ENCODE measurements at regions of chr3 and their contacts with region 1.

Region 1: GRCh38 chr3:129249276-129250065 is at the start of gene COPG1:
- DNase-seq: peak; percentile 75
- ATAC-seq: peak; percentile 88
- H3K4me3 ChIP-seq: peak within 1 kb of the TSS; percentile 95 to 97
- H3K27ac ChIP-seq: peak within 1 kb of the TSS; percentile 62
- H3K4me1 ChIP-seq: peaks cover 7 to 23% of the 10 kb centered on the region in 2 experiments; a peak in 3 of 4 replicates
- H3K27me3 ChIP-seq: no peaks in the 10 kb centered on the region
- CTCF ChIP-seq: no peak
- POLR2A ChIP-seq: peak; percentile 66
- RAD21 ChIP-seq: no peak
- total RNA-seq, gene COPG1: 182 TPM

Region 2: DNA sequence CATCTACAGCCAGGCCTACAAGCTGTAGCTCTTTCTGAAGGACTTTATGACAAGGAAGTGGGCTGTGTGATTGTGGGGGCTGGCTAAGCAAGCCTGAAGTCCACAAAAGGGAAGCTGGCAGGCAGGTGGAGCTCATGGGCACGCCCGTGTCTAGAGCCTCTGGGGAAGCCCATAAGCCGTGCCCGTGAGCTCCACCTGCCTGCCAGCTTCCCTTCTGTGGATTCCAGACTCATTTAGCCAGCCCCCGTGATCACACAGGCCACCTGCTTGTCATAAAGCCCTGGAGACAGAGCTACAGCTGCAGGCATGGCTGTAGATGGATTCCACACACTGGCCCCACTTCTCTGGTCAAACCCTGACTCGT is 233.1 kb before region 1 on chr3:
- CTCF ChIA-PET with region 1: interaction called, 10 read pairs
- POLR2A ChIA-PET with region 1: no interaction called
- RAD21 ChIA-PET with region 1: no interaction called
- intact Hi-C with region 1: loop called (anchors 10 kb)
- DNase-seq: no peak
- ATAC-seq: peak; percentile 89
- H3K4me3 ChIP-seq: no peak overlapping the region
- H3K27ac ChIP-seq: no peak overlapping the region
- H3K4me1 ChIP-seq: peaks cover 19 to 25% of the 10 kb centered on the region in 2 experiments
- H3K27me3 ChIP-seq: no peaks in the 10 kb centered on the region
- CTCF ChIP-seq: peak; percentile 10 to 46 (median 44); a peak in 3 of 6 replicates
- POLR2A ChIP-seq: no peak
- RAD21 ChIP-seq: no peak; the same call in 1 of the 2 replicates

Region 3: DNA sequence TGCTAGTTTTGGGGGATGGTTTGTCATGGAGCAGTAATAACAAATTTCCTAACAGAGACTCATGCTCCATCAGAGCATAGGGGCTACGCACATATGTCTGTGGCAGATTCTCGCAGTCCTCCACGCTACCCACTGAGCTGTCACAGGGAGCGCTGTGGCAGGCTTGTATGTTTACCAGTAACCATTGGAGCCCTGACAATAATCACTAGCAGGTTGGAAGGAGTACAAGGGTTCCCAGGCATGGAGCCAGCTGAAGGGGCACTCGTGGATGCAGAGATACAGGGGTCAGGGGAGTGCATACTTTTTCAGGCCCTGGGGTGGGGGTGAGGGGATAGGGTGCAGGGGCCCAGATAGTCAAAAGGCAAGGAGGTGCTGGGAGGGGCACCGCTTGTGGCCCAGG is 196.8 kb before region 1 on chr3:
- CTCF ChIA-PET with region 1: interaction called, 51 read pairs
- POLR2A ChIA-PET with region 1: interaction called, 3 read pairs
- RAD21 ChIA-PET with region 1: interaction called, 4 to 7 read pairs
- intact Hi-C with region 1: loop called (anchors 1 kb)
- DNase-seq: no peak
- ATAC-seq: no peak
- H3K4me3 ChIP-seq: no peak overlapping the region
- H3K27ac ChIP-seq: no peak overlapping the region
- H3K4me1 ChIP-seq: peaks cover 0 to 26% of the 10 kb centered on the region in 2 experiments; a peak in 3 of 4 replicates
- H3K27me3 ChIP-seq: no peaks in the 10 kb centered on the region
- CTCF ChIP-seq: no peak
- POLR2A ChIP-seq: no peak
- RAD21 ChIP-seq: no peak

Region 4: GRCh38 chr3:129183569-129184395 is 65.7 kb before region 1 on chr3 and contains the start of gene CNBP:
- CTCF ChIA-PET with region 1: interaction called, 8 read pairs
- POLR2A ChIA-PET with region 1: interaction called, 12 read pairs
- RAD21 ChIA-PET with region 1: interaction called in 1 of 2 experiments, 3 read pairs
- intact Hi-C with region 1: loop called (anchors 2 kb)
- DNase-seq: peak; percentile 78
- ATAC-seq: peak; percentile 97
- H3K4me3 ChIP-seq: peak within 1 kb of the TSS; percentile 73 to 99
- H3K27ac ChIP-seq: peak within 1 kb of the TSS; percentile 99
- H3K4me1 ChIP-seq: peaks cover 7 to 32% of the 10 kb centered on the region in 2 experiments
- H3K27me3 ChIP-seq: no peaks in the 10 kb centered on the region
- CTCF ChIP-seq: no peak
- POLR2A ChIP-seq: no peak
- RAD21 ChIP-seq: no peak; the same call in 1 of the 2 replicates
- total RNA-seq, gene CNBP: 353 TPM

Region 5: DNA sequence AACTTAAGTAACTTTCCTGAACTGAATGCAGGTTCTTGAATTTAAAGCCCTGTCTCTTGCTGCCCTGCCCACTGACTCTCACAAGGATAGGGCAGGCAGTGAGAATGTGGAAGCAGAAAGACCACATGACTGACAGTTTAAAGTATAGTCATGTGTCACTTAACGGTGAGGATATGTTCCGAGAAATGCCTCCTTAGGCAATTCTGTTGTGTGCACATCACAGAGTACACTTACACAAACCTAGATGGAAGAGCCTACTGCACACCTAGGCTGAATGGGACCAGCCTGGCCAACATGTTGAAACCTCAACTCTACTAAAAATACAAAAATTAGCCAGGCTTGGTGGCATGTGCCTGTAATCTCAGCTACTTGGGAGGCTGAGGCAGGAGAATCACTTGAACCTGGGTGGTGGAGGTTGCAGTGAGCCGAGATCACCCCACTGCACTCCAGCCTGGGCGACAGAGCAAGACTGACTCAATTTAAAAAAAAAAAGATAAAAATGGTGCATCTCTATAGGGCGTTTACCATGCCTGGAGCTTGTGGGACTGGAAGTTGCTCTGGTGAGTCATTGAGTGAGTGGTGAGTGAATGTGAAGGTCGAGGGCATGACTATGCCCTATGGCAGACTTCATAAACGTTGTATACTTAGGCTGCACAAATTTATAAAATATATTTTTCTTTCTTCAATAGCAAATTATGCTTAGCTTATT is 19.0 kb before region 1 on chr3:
- CTCF ChIA-PET with region 1: interaction called, 14 read pairs
- POLR2A ChIA-PET with region 1: interaction called, 3 read pairs
- RAD21 ChIA-PET with region 1: interaction called, 3 to 4 read pairs
- intact Hi-C with region 1: no loop called
- DNase-seq: no peak
- ATAC-seq: peak; percentile 60
- H3K4me3 ChIP-seq: peak overlapping the region in 1 of 2 experiments; percentile 22; a peak in 1 of 4 replicates
- H3K27ac ChIP-seq: no peak overlapping the region
- H3K4me1 ChIP-seq: peaks cover 27 to 68% of the 10 kb centered on the region in 2 experiments
- H3K27me3 ChIP-seq: no peaks in the 10 kb centered on the region
- CTCF ChIP-seq: no peak
- POLR2A ChIP-seq: no peak
- RAD21 ChIP-seq: no peak

Measured in HCT116 (cell line).